Posterior vena cava (tissue), 2 donors: ENCODE measurements at regions of chr18 and their contacts with region 1.

Region 1: GRCh38 chr18:39624934-39625333 is 2059.3 kb upstream of the CELF4 start:
- DNase-seq: no peak

Region 2: DNA sequence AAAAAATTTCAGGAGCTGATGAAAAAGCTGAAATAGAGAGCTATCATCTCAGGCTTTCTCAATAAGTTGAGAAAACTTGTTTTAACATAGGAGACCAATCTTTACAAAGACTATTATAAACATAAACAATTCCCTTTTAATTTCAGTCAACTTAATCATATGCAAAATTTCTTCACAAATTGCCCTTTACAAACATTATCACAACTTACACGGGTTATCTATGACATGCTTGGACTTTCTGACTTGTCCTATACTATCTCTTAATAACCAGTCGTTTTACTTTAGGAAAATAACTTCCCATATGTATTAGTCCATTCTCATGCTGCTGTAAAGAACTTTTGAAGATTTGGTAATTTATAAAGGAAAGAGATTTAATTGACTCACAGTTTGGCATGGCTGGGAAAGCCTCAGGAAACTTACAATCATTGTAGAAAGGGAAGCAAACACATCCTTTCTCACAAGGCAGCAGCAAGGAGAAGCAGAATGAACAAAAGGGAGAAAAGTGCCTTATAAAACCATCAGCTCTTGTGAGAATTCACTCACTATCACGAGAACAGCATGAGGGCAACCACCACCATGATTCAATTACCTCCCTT is 475.6 kb before region 1 on chr18:
- intact Hi-C with region 1: no loop called
- DNase-seq: no peak

Region 3: GRCh38 chr18:39835303-39836030 is 210.5 kb after region 1 on chr18:
- intact Hi-C with region 1: no loop called
- DNase-seq: no peak

Region 4: DNA sequence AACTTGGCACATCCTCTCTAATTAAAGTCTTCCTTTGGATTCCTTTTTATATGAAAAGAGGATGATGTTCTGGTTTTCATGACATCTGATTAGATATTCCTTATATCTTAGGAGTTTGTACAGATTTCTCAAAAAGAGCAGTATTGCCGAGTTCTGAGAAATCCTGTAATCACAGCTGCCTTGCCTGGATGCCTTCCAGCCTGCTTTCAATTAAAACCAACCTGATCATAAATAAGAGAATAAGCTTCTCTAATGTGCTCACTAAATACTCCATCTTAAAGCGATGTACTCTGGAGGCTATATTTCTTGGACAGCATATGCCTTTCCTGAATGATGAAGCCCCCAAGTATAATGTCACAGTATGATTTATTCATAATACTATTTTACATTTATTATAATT is 1126.3 kb after region 1 on chr18:
- intact Hi-C with region 1: loop called in 1 of 2 experiments (anchors 5 kb)
- DNase-seq: no peak